PC-9 (cell line): ENCODE measurements at regions of chr20 and their contacts with region 1.

Region 1: GRCh38 chr20:46757754-46758678 is 48.6 kb downstream of the SLC2A10 start:
- DNase-seq: peak; percentile 55 to 63
- H3K4me3 ChIP-seq: no peak overlapping the region
- H3K27ac ChIP-seq: no peak overlapping the region
- H3K4me1 ChIP-seq: no peaks in the 10 kb centered on the region
- H3K27me3 ChIP-seq: no peaks in the 10 kb centered on the region
- CTCF ChIP-seq: peak; percentile 100

Region 2: GRCh38 chr20:46838011-46838410 is 80.0 kb after region 1 on chr20:
- CTCF ChIA-PET with region 1: no interaction called
- POLR2A ChIA-PET with region 1: no interaction called
- intact Hi-C with region 1: no loop called
- DNase-seq: no peak
- H3K4me3 ChIP-seq: no peak overlapping the region
- H3K27ac ChIP-seq: no peak overlapping the region
- H3K4me1 ChIP-seq: no peaks in the 10 kb centered on the region
- H3K27me3 ChIP-seq: peaks cover 3% of the 10 kb centered on the region; the same call in 1 of the 2 replicates
- CTCF ChIP-seq: no peak

Region 3: DNA sequence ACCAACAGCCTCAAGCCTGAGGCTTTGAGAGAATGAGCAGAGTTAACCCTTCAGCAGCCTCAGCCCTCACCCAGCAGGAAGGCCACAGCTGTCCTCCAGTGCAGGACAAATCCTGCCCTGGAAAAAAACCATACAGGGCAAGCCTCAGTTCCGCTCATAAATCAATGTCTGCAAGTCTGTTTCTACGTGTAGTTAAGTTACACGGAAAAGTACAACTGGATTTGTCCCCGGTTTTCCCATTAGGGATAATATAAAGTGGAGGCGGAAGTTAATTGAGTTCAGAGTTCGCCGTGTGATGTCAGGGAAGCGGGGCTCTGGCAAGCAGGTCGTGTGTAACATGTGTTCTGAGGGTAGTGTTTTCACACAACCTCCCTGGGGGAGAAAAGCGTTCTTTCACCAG is 92.4 kb after region 1 on chr20:
- CTCF ChIA-PET with region 1: no interaction called
- POLR2A ChIA-PET with region 1: interaction called, 11 read pairs
- intact Hi-C with region 1: no loop called
- DNase-seq: no peak
- H3K4me3 ChIP-seq: no peak overlapping the region
- H3K27ac ChIP-seq: no peak overlapping the region
- H3K4me1 ChIP-seq: no peaks in the 10 kb centered on the region
- H3K27me3 ChIP-seq: peaks cover 17% of the 10 kb centered on the region; the same call in 1 of the 2 replicates
- CTCF ChIP-seq: no peak

Region 4: DNA sequence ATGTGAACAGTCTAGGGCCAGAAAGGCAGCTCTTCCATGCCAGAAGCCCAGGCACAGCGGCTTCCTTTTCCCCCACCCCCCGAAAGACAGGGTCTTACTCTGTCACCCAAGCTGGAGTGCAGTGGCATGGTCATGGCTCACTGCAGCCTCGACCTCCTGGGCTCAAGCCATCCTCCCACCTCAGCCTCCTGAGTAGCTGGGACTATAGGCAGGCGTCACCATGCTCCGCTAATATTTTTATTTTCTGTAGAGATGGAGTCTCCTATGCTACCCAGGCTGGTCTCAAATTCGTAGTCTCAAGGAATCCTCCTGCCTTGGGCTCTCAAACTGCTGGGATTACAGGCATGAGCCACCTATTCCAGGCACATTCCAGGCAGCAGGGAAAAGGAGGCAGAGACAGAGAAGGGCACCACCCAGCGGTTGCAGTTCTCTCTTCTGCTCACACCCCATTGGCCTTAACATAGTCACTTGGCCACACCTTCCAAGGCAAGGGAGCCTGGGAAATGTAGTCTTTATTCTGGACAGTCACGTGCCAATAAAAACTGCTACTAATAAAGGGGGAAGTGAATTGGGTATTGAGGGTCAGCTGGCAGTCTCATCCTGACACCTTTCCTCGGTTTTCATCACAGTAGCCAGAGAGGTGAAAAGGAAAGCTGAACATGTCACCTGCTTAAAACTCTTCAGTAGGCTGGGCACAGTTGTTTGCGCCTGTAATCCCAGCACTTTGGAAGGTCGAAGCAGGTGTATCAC is 392.6 kb after region 1 on chr20:
- CTCF ChIA-PET with region 1: interaction called, 8 read pairs
- POLR2A ChIA-PET with region 1: no interaction called
- intact Hi-C with region 1: loop called (anchors 1 kb)
- DNase-seq: peak; percentile 68 to 69
- H3K4me3 ChIP-seq: no peak overlapping the region
- H3K27ac ChIP-seq: no peak overlapping the region
- H3K4me1 ChIP-seq: peaks cover 18% of the 10 kb centered on the region
- H3K27me3 ChIP-seq: no peaks in the 10 kb centered on the region
- CTCF ChIP-seq: peak; percentile 86

Region 5: GRCh38 chr20:47196091-47197081 is 438.4 kb after region 1 on chr20:
- CTCF ChIA-PET with region 1: no interaction called
- POLR2A ChIA-PET with region 1: no interaction called
- intact Hi-C with region 1: loop called (anchors 10 kb)
- DNase-seq: peak; percentile 72 to 82
- H3K4me3 ChIP-seq: no peak overlapping the region
- H3K27ac ChIP-seq: no peak overlapping the region
- H3K4me1 ChIP-seq: 0 out of 2 replicates have a peak, but pooled peaks cover 10% of the 10 kb centered on the region
- H3K27me3 ChIP-seq: no peaks in the 10 kb centered on the region
- CTCF ChIP-seq: peak; percentile 99

Region 6: DNA sequence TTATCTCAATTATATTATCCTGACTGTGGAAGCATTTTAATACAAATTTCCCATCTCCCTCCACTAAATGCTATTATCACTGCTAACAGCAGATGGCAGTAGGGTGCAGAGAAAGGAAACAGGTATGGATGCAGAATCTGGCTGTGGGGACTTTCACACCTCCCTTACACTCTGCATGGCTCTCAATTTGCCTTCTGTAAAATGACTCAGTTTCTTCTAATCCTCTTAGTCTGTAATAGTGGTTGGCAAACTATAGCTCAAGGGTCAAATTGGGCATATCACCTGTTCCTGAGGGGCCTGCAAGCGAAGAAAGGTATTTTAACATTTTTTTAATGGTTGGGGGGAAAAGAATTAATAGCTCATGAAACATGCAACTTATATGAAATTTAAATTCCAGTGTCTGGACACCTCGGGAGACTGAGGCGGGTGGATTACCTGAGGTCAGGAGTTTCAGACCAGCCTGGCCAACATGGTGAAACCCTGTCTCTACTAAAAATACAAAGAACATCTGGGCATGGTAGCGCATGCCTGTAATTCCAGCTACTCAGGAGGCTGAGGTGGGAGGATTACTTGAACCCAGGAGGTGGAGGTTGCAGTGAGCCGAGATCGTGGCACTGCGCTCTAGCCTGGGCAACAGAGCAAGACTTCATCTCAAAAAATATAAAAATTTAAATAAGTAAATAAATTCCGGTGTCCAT is 515.0 kb after region 1 on chr20:
- CTCF ChIA-PET with region 1: no interaction called
- POLR2A ChIA-PET with region 1: no interaction called
- intact Hi-C with region 1: loop called (anchors 5 kb)
- DNase-seq: peak; percentile 53 to 58
- H3K4me3 ChIP-seq: no peak overlapping the region
- H3K27ac ChIP-seq: no peak overlapping the region
- H3K4me1 ChIP-seq: peaks cover 40% of the 10 kb centered on the region
- H3K27me3 ChIP-seq: no peaks in the 10 kb centered on the region
- CTCF ChIP-seq: peak; percentile 97